K562 (cell line): ENCODE measurements at regions of chr3 and their contacts with region 1.

Region 1: DNA sequence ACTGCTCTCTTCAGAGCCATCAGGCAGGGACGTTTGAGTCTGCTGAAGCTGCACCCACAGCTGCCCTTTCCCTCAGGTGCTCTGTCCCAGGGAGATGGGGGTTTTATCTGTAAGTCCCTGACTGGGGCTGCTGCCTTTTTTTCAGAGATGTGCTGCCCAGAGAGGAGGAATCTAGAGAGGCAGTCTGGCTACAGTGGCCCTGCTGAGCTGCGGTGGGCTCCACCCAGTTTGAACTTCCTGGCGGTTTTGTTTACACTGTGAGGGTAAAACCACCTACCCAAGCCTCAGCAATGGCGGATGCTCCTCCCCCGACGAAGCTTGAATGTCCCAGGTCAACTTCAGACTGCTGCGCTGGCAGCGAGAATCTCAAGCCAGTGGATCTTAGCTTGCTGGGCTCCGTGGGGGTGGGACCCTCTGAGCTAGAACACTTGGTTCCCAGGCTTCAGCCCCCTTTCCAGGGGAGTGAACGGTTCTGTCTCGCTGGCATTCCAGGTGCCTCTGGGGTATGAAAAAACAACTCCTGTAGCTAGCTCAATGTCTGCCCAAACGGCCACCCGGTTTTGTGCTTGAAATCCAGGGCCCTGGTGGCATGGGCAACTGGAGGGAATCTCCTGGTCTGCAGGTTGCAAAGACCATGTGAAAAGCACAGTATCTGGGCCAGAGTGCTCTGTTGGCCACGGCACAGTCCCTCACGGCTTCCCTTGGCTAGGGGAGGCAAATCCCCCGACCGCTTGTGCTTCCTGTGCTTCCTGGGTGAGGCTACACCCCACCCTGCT is 21.1 kb upstream of the ST6GAL1 start:
- DNase-seq: peak; percentile 38 to 90 (median 46)
- ATAC-seq: peak; percentile 94
- H3K4me3 ChIP-seq: peak overlapping the region; percentile 18; the same call in 1 of the 2 replicates
- H3K27ac ChIP-seq: peak overlapping the region; percentile 94
- H3K4me1 ChIP-seq: peaks cover 6 to 9% of the 10 kb centered on the region in 2 experiments; a peak in 4 of 5 replicates
- H3K27me3 ChIP-seq: no peaks in the 10 kb centered on the region
- CTCF ChIP-seq: no peak; a peak in 1 of 6 replicates
- EP300 ChIP-seq: no peak; the same call in 1 of the 2 replicates
- POLR2A ChIP-seq: peak; percentile 75
- RAD21 ChIP-seq: no peak; a peak in 1 of 4 replicates

Region 2: GRCh38 chr3:186849374-186849975 is 59.8 kb before region 1 on chr3:
- CTCF ChIA-PET with region 1: no interaction called
- POLR2A ChIA-PET with region 1: no interaction called
- in situ Hi-C with region 1: no loop called
- intact Hi-C with region 1: loop called (anchors 2 kb)
- DNase-seq: peak in 2 of 4 experiments; percentile 54 to 61
- ATAC-seq: peak; percentile 92
- H3K4me3 ChIP-seq: no peak overlapping the region
- H3K27ac ChIP-seq: no peak overlapping the region
- H3K4me1 ChIP-seq: no peaks in the 10 kb centered on the region; a peak in 1 of 5 replicates
- H3K27me3 ChIP-seq: no peaks in the 10 kb centered on the region
- CTCF ChIP-seq: peak; percentile 63 to 90 (median 77)
- EP300 ChIP-seq: peak; percentile 33; the same call in 1 of the 2 replicates
- POLR2A ChIP-seq: no peak
- RAD21 ChIP-seq: peak; percentile 96 to 98

Region 3: GRCh38 chr3:186920301-186920700 is 11.0 kb after region 1 on chr3:
- CTCF ChIA-PET with region 1: no interaction called
- POLR2A ChIA-PET with region 1: interaction called, 10 read pairs
- in situ Hi-C with region 1: no loop called
- intact Hi-C with region 1: no loop called
- DNase-seq: no peak
- ATAC-seq: no peak
- H3K4me3 ChIP-seq: no peak overlapping the region
- H3K27ac ChIP-seq: no peak overlapping the region
- H3K4me1 ChIP-seq: peaks cover 14 to 34% of the 10 kb centered on the region in 2 experiments; a peak in 4 of 5 replicates
- H3K27me3 ChIP-seq: no peaks in the 10 kb centered on the region
- CTCF ChIP-seq: no peak
- EP300 ChIP-seq: no peak
- POLR2A ChIP-seq: no peak
- RAD21 ChIP-seq: no peak

Region 4: GRCh38 chr3:186953011-186953487 is 43.8 kb after region 1 on chr3:
- CTCF ChIA-PET with region 1: no interaction called
- POLR2A ChIA-PET with region 1: no interaction called
- in situ Hi-C with region 1: no loop called
- intact Hi-C with region 1: no loop called
- DNase-seq: peak in 2 of 4 experiments; percentile 52 to 72
- ATAC-seq: peak; percentile 42
- H3K4me3 ChIP-seq: no peak overlapping the region
- H3K27ac ChIP-seq: peak overlapping the region; percentile 75
- H3K4me1 ChIP-seq: peaks cover 49 to 59% of the 10 kb centered on the region in 2 experiments
- H3K27me3 ChIP-seq: no peaks in the 10 kb centered on the region
- CTCF ChIP-seq: no peak
- EP300 ChIP-seq: peak; percentile 35; the same call in 1 of the 2 replicates
- POLR2A ChIP-seq: no peak; the same call in 1 of the 2 replicates
- RAD21 ChIP-seq: peak in 1 of 2 experiments; percentile 33; a peak in 2 of 4 replicates